Activated T-helper 1 cell treated with anti-CD3 and anti-CD28 coated beads, Interleukin-12 subunit alpha, Interleukin-12 subunit beta, Interleukin-2, Interleukin-4 antibody, amounts not matched to agents 30 ng/mL and 10 ng/mL and 1 ng/mL, durations not matched to agents 14 hours and 24 hours and 36 hours (primary cell): ENCODE measurements at regions of chrX and their contacts with region 1.

Region 1: DNA sequence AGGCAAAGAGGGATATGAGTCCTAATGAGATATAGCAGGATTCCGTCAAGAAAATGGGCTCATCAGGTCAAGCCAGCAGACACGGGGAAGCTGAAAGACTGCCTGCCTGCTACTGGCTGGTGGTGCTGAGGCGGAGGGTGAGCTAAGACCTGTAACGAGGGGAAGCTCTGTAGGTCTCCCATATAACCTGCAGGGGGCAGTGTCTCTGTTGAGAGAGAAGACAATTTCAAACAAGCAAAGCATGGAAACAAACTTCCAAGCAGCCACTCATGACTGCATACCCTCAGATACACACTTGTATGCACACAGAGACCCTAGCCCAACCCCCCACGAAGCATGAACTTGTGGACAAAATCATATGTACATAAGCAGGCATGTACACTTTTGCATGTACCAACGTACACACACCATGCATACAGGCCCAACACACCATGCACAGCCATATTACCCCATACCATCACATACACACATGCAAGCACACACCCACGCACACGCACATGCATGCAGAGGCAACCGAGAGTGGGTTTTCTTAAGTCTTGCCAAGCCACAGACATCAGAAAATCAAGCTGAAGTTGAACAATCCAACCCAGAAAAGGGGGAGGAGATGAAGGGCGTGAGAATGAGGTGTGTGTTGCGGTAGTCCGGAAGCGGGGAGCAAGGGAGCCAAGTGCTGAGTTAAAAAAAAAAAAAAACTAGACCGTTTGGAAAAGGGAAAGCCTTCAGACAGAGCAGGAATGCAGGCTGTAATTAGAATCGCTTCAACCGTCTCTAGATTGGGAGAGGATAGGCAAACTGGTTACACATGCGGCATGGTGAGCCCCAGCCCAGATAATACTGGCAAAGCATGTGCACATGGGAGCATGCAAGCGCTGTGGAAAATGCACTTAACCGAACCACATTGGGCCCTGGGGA is 71.0 kb downstream of the PJA1 start:
- DNase-seq: peak; percentile 1
- H3K4me3 Mint-ChIP-seq: no peak overlapping the region
- H3K27ac Mint-ChIP-seq: no peak overlapping the region
- H3K4me1 Mint-ChIP-seq: no peaks in the 10 kb centered on the region
- H3K27me3 Mint-ChIP-seq: peaks cover 2% of the 10 kb centered on the region

Region 2: GRCh38 chrX:69285881-69286564 is 191.8 kb after region 1 on chrX:
- intact Hi-C with region 1: loop called (anchors 5 kb)
- DNase-seq: peak; percentile 30
- H3K4me3 Mint-ChIP-seq: no peak overlapping the region
- H3K27ac Mint-ChIP-seq: no peak overlapping the region
- H3K4me1 Mint-ChIP-seq: no peaks in the 10 kb centered on the region
- H3K27me3 Mint-ChIP-seq: no peaks in the 10 kb centered on the region